HEK293T (cell line): ENCODE measurements at regions of chr7 and their contacts with region 1.

Region 1: GRCh38 chr7:148698397-148699023 is at the start of gene CUL1:
- DNase-seq: peak; percentile 83

Region 2: GRCh38 chr7:148712678-148713329 is 14.3 kb after region 1 on chr7:
- CTCF ChIA-PET with region 1: interaction called, 6 read pairs
- POLR2A ChIA-PET with region 1: interaction called, 32 read pairs
- DNase-seq: no peak

Region 3: DNA sequence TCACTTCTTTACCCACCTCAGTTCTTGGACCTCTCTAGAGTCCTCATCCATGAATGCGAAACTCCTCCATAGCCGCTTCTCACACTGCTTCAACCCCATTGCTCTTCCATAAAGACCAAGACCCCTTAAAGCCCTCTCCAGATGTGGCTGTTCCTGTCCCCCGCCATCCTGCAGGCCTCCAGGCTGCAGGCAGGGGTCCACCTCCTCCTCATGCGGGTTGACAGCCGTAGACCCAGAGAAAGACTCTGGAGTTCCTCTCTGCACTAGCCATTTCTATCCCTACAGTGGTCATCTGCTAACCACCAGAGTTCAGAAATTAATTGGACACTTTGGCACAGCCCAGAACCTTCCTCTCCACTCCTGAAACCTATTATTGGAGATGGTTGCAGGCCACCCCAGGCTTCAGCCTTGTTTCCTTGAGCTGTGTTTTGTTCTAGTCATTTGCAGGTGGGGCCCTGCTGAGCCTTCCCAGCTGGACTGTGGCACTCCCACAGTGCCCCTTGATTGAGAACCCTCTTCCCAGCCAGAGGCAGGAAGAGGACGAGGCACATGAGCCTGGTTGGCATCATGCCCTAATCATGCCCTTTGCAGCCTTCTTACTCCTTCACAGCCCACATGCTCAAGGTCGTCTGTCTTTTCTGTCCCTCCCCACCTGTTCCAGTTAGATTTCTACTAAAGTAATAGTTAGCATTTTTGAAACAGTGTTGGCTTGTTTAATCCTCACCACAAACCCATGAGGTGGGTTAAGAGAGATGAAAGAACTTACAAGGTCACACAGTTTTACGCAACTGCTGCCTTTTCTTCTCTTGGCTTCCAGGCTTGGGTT is 24.0 kb after region 1 on chr7:
- CTCF ChIA-PET with region 1: interaction called, 3 read pairs
- POLR2A ChIA-PET with region 1: interaction called, 17 read pairs
- DNase-seq: no peak

Region 4: DNA sequence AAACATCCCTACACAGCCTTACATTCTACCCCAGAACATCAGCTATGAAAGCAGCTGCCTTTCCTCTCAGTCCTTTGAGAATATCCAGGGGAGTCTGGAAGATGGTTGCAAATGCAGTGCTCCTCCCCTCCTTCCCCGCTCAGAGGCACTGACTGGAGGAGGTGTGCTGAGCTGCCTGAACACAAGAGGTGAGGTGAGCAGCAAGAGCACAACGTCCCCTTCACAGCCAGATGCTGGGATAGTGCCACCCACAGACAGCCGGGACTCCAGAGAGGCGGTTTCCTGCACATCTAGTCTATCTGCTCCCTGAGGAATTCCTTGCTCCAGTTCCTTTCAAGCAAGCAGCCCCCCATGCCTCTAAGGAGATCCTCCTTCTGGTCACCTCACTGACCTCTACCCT is 111.3 kb after region 1 on chr7:
- CTCF ChIA-PET with region 1: no interaction called
- POLR2A ChIA-PET with region 1: no interaction called
- DNase-seq: no peak